CD14-positive monocyte (primary cell): ENCODE measurements at regions of chr10 and their contacts with region 1.

Region 1: GRCh38 chr10:26437637-26438461 is at the start of gene APBB1IP:
- DNase-seq: peak; percentile 96 to 98 (median 97)
- H3K4me3 ChIP-seq: peak within 1 kb of the TSS; percentile 61 to 94 (median 77)
- H3K4me3 Mint-ChIP-seq: peak within 1 kb of the TSS; percentile 91 to 97
- H3K27ac ChIP-seq: peak within 1 kb of the TSS; percentile 96 to 97
- H3K27ac Mint-ChIP-seq: peak within 1 kb of the TSS; percentile 96 to 99 (median 99)
- H3K4me1 ChIP-seq: peaks cover 58 to 84% of the 10 kb centered on the region in 2 donors
- H3K4me1 Mint-ChIP-seq: peaks cover 54% of the 10 kb centered on the region
- H3K27me3 ChIP-seq: no peaks in the 10 kb centered on the region
- H3K27me3 Mint-ChIP-seq: no peaks in the 10 kb centered on the region
- CTCF ChIP-seq: peak; percentile 22
- polyA plus RNA-seq, gene APBB1IP: 24.6 to 78.7 (median 45.4) TPM

Region 2: DNA sequence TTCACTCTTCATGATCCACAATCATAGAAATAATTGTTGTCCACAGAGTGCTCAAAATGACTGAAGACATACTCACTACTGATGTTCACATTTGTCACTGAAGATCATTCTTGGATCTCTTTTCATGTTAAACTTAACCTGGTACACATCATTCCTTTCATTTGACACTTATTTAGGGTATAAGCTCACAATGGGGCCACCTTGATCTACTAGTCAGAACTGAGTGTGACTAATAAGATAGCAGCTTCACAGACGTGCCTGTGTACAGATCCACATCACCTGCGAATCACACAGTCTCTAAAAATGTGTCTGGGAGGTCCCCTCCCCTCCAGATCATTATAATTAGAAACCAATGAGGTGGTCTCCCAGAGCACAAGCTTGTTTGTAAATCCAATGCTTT is 199.5 kb before region 1 on chr10:
- intact Hi-C with region 1: no loop called
- DNase-seq: no peak
- H3K4me3 ChIP-seq: no peak overlapping the region
- H3K4me3 Mint-ChIP-seq: no peak overlapping the region
- H3K27ac ChIP-seq: no peak overlapping the region
- H3K27ac Mint-ChIP-seq: no peak overlapping the region
- H3K4me1 ChIP-seq: no peaks in the 10 kb centered on the region
- H3K4me1 Mint-ChIP-seq: no peaks in the 10 kb centered on the region
- H3K27me3 ChIP-seq: peaks cover 0 to 3% of the 10 kb centered on the region in 2 donors
- H3K27me3 Mint-ChIP-seq: peaks cover 4 to 10% (median 10%) of the 10 kb centered on the region in 3 donors
- CTCF ChIP-seq: no peak

Region 3: GRCh38 chr10:26386781-26387180 is 51.1 kb before region 1 on chr10:
- intact Hi-C with region 1: loop called (anchors 10 kb)
- DNase-seq: peak; percentile 74 to 83 (median 78)
- H3K4me3 ChIP-seq: peak overlapping the region in 1 of 3 experiments; percentile 17
- H3K4me3 Mint-ChIP-seq: peak overlapping the region in 1 of 2 donors; percentile 30
- H3K27ac ChIP-seq: peak overlapping the region in 1 of 2 donors; percentile 39
- H3K27ac Mint-ChIP-seq: peak overlapping the region in 6 of 7 donors; percentile 2 to 63 (median 34)
- H3K4me1 ChIP-seq: peaks cover 26 to 28% of the 10 kb centered on the region in 2 donors
- H3K4me1 Mint-ChIP-seq: peaks cover 33% of the 10 kb centered on the region
- H3K27me3 ChIP-seq: no peaks in the 10 kb centered on the region
- H3K27me3 Mint-ChIP-seq: peaks cover 0 to 4% (median 2%) of the 10 kb centered on the region in 3 donors
- CTCF ChIP-seq: no peak

Region 4: DNA sequence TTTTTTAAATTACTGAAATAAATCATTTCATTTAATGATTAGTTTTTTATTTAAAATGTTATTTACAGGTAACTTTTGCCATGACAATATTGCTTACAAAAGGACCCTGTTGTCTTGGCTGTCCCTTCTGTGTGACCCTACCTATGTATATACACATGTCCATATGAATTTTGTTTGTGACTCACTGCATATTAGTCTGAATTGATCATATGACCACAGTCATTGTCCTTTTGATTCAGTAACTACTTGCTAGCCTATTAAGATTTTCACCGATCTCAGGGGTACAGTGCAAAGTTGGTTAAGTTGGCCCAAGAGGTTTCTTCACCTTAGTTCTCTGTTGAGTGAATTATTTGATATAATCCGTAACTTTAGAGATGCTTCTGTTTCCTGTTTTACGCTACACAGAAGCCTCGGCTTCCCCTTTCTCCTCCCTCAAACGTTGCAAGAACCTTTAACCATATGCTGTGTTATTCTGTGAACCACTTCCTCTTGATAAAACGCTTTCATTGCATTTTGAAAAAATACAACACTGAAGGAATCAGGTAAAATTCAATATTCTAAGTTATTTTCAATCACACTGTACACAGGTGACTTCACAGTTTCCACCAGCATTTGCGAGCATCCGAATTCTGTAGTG is 44.2 kb after region 1 on chr10:
- intact Hi-C with region 1: loop called in 1 of 2 experiments (anchors 5 kb)
- DNase-seq: peak; percentile 81 to 91 (median 84)
- H3K4me3 ChIP-seq: peak overlapping the region in 2 of 3 experiments; percentile 25 to 57
- H3K4me3 Mint-ChIP-seq: peak overlapping the region in 1 of 2 donors; percentile 71
- H3K27ac ChIP-seq: peak overlapping the region; percentile 80 to 86
- H3K27ac Mint-ChIP-seq: peak overlapping the region; percentile 85 to 97 (median 93)
- H3K4me1 ChIP-seq: peaks cover 70 to 89% of the 10 kb centered on the region in 2 donors
- H3K4me1 Mint-ChIP-seq: peaks cover 71% of the 10 kb centered on the region
- H3K27me3 ChIP-seq: no peaks in the 10 kb centered on the region
- H3K27me3 Mint-ChIP-seq: no peaks in the 10 kb centered on the region
- CTCF ChIP-seq: no peak

Region 5: GRCh38 chr10:26491934-26492333 is 54.1 kb after region 1 on chr10:
- intact Hi-C with region 1: loop called in 1 of 2 experiments (anchors 5 kb)
- DNase-seq: no peak
- H3K4me3 ChIP-seq: peak overlapping the region in 1 of 3 experiments; percentile 41
- H3K4me3 Mint-ChIP-seq: peak overlapping the region; percentile 50 to 59
- H3K27ac ChIP-seq: peak overlapping the region; percentile 73 to 78
- H3K27ac Mint-ChIP-seq: peak overlapping the region; percentile 80 to 97 (median 94)
- H3K4me1 ChIP-seq: peaks cover 50 to 57% of the 10 kb centered on the region in 2 donors
- H3K4me1 Mint-ChIP-seq: peaks cover 55% of the 10 kb centered on the region
- H3K27me3 ChIP-seq: no peaks in the 10 kb centered on the region
- H3K27me3 Mint-ChIP-seq: peaks cover 0 to 3% (median 0%) of the 10 kb centered on the region in 3 donors
- CTCF ChIP-seq: no peak